ENCODE measurements at regions of chr3 and their contacts with region 1.

Region 1: GRCh38 chr3:15629860-15630597 is 28.5 kb downstream of the BTD start:
- DNase-seq: no peak
- H3K4me3 ChIP-seq: peak overlapping the region; percentile 32 to 45 (median 41)
- H3K27ac ChIP-seq: peak overlapping the region; percentile 53 to 78 (median 68)
- H3K4me1 ChIP-seq: peaks cover 15 to 52% (median 45%) of the 10 kb centered on the region in 4 donors
- H3K27me3 ChIP-seq: no peaks in the 10 kb centered on the region
- CTCF ChIP-seq: peak; percentile 74 to 83 (median 79)
- EP300 ChIP-seq: no peak
- POLR2A ChIP-seq: no peak

Region 2: GRCh38 chr3:15815696-15816095 is 185.7 kb after region 1 on chr3:
- intact Hi-C with region 1: loop called (anchors 1 kb)
- DNase-seq: no peak
- H3K4me3 ChIP-seq: no peak overlapping the region
- H3K27ac ChIP-seq: no peak overlapping the region
- H3K4me1 ChIP-seq: peaks cover 8 to 23% (median 20%) of the 10 kb centered on the region in 4 donors
- H3K27me3 ChIP-seq: no peaks in the 10 kb centered on the region
- CTCF ChIP-seq: peak; percentile 50 to 65 (median 56)
- EP300 ChIP-seq: no peak
- POLR2A ChIP-seq: no peak

Measured in esophagus muscularis mucosa (tissue), 4 donors.